Naive thymus-derived CD8-positive, alpha-beta T cell (primary cell): ENCODE measurements at regions of chr9 and their contacts with region 1.

Region 1: GRCh38 chr9:33139421-33140228 is 27.5 kb downstream of the B4GALT1 start:
- DNase-seq: no peak
- ATAC-seq: no peak
- H3K4me3 Mint-ChIP-seq: peak overlapping the region in 9 of 10 donors; percentile 33 to 78 (median 61)
- H3K27ac Mint-ChIP-seq: peak overlapping the region; percentile 86 to 99 (median 91)
- H3K4me1 Mint-ChIP-seq: peaks cover 51 to 98% (median 96%) of the 10 kb centered on the region in 4 donors
- H3K27me3 Mint-ChIP-seq: no peaks in the 10 kb centered on the region

Region 2: GRCh38 chr9:33159760-33160127 is 20.1 kb after region 1 on chr9:
- POLR2A ChIA-PET with region 1: interaction called, 63 read pairs
- DNase-seq: peak in 7 of 10 donors; percentile 57 to 81 (median 73)
- ATAC-seq: peak; percentile 60 to 80
- H3K4me3 Mint-ChIP-seq: peak overlapping the region; percentile 63 to 91 (median 78)
- H3K27ac Mint-ChIP-seq: peak overlapping the region; percentile 92 to 98 (median 97)
- H3K4me1 Mint-ChIP-seq: peaks cover 56 to 98% (median 93%) of the 10 kb centered on the region in 4 donors
- H3K27me3 Mint-ChIP-seq: no peaks in the 10 kb centered on the region